ENCODE measurements at regions of chr11 and their contacts with region 1.

Region 1: DNA sequence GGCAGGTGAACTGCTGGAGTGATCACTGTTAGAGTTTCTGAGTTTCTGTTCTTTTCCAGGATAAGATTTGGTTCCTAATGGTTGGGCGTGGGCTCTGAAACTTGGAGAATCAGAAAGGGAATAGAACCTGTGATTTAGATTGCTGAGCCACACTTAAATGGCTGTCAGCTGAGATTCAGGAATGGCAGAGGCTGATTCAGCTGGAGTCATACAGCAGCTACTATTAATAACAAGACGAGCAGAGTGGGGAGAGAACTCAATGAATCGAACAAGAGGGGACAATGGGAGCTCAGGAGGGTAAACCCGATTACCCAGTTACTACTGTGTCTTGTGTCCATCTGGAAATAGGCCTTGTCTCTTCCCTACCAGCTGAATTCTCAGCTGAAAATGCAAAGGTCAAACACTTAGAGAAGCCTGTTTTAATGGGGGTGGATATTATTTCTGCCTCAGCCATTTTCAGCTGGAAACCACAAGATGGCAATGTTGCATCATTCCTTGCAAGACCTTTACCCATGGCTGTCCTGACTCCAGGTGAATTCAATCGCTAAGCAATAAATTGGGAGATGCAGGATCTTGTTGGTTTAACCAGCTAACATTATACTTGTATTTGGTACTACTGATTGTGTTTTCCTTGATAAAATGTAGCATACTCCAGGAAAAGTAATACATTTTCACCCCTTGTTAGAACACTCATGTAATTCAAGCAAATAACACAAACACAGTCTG is 104.5 kb upstream of the RAG2 start:
- DNase-seq: peak; percentile 78
- H3K4me3 Mint-ChIP-seq: no peak overlapping the region
- H3K27ac Mint-ChIP-seq: no peak overlapping the region
- H3K4me1 Mint-ChIP-seq: peaks cover 11% of the 10 kb centered on the region
- H3K27me3 Mint-ChIP-seq: peaks cover 3% of the 10 kb centered on the region
- CTCF ChIP-seq: peak; percentile 91

Region 2: GRCh38 chr11:36719358-36720107 is 17.0 kb after region 1 on chr11:
- CTCF ChIA-PET with region 1: interaction called, 46 read pairs
- POLR2A ChIA-PET with region 1: no interaction called
- intact Hi-C with region 1: no loop called
- DNase-seq: no peak
- H3K4me3 Mint-ChIP-seq: no peak overlapping the region
- H3K27ac Mint-ChIP-seq: no peak overlapping the region
- H3K4me1 Mint-ChIP-seq: no peaks in the 10 kb centered on the region
- H3K27me3 Mint-ChIP-seq: peaks cover 24% of the 10 kb centered on the region
- CTCF ChIP-seq: no peak

Region 3: GRCh38 chr11:36724742-36725385 is 22.4 kb after region 1 on chr11:
- CTCF ChIA-PET with region 1: interaction called, 10 read pairs
- POLR2A ChIA-PET with region 1: no interaction called
- intact Hi-C with region 1: no loop called
- DNase-seq: no peak
- H3K4me3 Mint-ChIP-seq: no peak overlapping the region
- H3K27ac Mint-ChIP-seq: no peak overlapping the region
- H3K4me1 Mint-ChIP-seq: no peaks in the 10 kb centered on the region
- H3K27me3 Mint-ChIP-seq: peaks cover 23% of the 10 kb centered on the region
- CTCF ChIP-seq: no peak

Region 4: GRCh38 chr11:36738292-36738861 is 35.9 kb after region 1 on chr11:
- CTCF ChIA-PET with region 1: interaction called, 51 read pairs
- POLR2A ChIA-PET with region 1: interaction called, 5 read pairs
- intact Hi-C with region 1: no loop called
- DNase-seq: no peak
- H3K4me3 Mint-ChIP-seq: no peak overlapping the region
- H3K27ac Mint-ChIP-seq: no peak overlapping the region
- H3K4me1 Mint-ChIP-seq: no peaks in the 10 kb centered on the region
- H3K27me3 Mint-ChIP-seq: peaks cover 64% of the 10 kb centered on the region
- CTCF ChIP-seq: no peak

Region 5: DNA sequence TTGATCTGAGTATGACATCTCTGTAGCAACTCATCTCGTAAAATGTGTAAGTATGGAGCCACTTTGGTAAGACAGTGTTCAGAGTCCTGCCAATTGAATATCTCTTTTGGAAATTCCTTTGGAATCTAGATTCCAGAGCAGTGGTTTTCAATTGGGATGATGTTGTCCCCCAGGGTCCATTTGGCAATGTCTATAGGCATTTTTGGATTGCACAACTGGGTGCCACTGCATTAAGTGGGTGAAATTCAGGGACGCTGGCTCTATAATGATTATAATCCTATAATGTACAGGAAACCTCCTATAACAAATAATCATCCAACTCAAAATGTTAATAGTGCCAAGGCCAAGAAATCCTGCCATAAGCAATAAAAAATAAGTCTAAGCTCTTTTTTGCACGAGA is 300.3 kb after region 1 on chr11:
- CTCF ChIA-PET with region 1: interaction called, 4 read pairs
- POLR2A ChIA-PET with region 1: no interaction called
- intact Hi-C with region 1: loop called (anchors 10 kb)
- DNase-seq: no peak
- H3K4me3 Mint-ChIP-seq: no peak overlapping the region
- H3K27ac Mint-ChIP-seq: no peak overlapping the region
- H3K4me1 Mint-ChIP-seq: no peaks in the 10 kb centered on the region
- H3K27me3 Mint-ChIP-seq: no peaks in the 10 kb centered on the region
- CTCF ChIP-seq: no peak